MCF 10A (cell line): ENCODE measurements at regions of chr18 and their contacts with region 1.

Region 1: GRCh38 chr18:21117409-21118131 is 6.0 kb upstream of the ROCK1 start:
- DNase-seq: no peak
- H3K4me3 Mint-ChIP-seq: no peak overlapping the region
- H3K27ac Mint-ChIP-seq: no peak overlapping the region
- H3K4me1 Mint-ChIP-seq: no peaks in the 10 kb centered on the region
- H3K27me3 Mint-ChIP-seq: no peaks in the 10 kb centered on the region
- CTCF ChIP-seq: no peak

Region 2: GRCh38 chr18:21163647-21164547 is 46.3 kb after region 1 on chr18:
- CTCF ChIA-PET with region 1: interaction called, 3 read pairs
- POLR2A ChIA-PET with region 1: interaction called, 23 read pairs
- intact Hi-C with region 1: no loop called
- DNase-seq: peak; percentile 85
- H3K4me3 Mint-ChIP-seq: peak overlapping the region; percentile 28
- H3K27ac Mint-ChIP-seq: peak overlapping the region; percentile 59
- H3K4me1 Mint-ChIP-seq: peaks cover 15% of the 10 kb centered on the region
- H3K27me3 Mint-ChIP-seq: no peaks in the 10 kb centered on the region
- CTCF ChIP-seq: no peak

Region 3: GRCh38 chr18:21803495-21803894 is 685.9 kb after region 1 on chr18:
- CTCF ChIA-PET with region 1: no interaction called
- POLR2A ChIA-PET with region 1: no interaction called
- intact Hi-C with region 1: no loop called
- DNase-seq: peak; percentile 35
- H3K4me3 Mint-ChIP-seq: no peak overlapping the region
- H3K27ac Mint-ChIP-seq: no peak overlapping the region
- H3K4me1 Mint-ChIP-seq: peaks cover 7% of the 10 kb centered on the region
- H3K27me3 Mint-ChIP-seq: no peaks in the 10 kb centered on the region
- CTCF ChIP-seq: no peak